KBM-7 (cell line): ENCODE measurements at regions of chr22 and their contacts with region 1.

Region 1: DNA sequence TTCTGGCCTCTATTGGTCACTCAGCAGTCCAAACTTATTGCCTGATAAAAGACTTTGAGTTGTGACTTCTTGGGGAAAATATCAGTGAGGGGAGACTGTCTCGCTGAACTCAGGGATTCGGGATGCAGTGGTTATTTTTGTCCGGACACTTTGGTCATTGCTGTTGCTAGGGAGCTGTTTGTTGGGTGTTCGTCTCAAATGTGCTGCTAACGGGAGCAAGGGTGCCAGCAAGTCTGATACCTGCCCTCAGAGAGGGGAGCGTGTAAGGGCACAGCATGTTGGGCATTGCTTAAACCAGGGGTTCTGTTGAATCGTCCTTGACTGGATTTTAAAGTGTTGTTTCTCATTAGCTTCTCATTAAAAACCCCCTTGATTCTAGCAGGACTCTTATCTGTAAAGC is 49.2 kb upstream of the SLC25A18 start:
- DNase-seq: no peak

Region 2: GRCh38 chr22:17084554-17085276 is 429.4 kb before region 1 on chr22 and contains the start of gene IL17RA:
- in situ Hi-C with region 1: loop called (anchors 10 kb)
- DNase-seq: peak; percentile 90

Region 3: DNA sequence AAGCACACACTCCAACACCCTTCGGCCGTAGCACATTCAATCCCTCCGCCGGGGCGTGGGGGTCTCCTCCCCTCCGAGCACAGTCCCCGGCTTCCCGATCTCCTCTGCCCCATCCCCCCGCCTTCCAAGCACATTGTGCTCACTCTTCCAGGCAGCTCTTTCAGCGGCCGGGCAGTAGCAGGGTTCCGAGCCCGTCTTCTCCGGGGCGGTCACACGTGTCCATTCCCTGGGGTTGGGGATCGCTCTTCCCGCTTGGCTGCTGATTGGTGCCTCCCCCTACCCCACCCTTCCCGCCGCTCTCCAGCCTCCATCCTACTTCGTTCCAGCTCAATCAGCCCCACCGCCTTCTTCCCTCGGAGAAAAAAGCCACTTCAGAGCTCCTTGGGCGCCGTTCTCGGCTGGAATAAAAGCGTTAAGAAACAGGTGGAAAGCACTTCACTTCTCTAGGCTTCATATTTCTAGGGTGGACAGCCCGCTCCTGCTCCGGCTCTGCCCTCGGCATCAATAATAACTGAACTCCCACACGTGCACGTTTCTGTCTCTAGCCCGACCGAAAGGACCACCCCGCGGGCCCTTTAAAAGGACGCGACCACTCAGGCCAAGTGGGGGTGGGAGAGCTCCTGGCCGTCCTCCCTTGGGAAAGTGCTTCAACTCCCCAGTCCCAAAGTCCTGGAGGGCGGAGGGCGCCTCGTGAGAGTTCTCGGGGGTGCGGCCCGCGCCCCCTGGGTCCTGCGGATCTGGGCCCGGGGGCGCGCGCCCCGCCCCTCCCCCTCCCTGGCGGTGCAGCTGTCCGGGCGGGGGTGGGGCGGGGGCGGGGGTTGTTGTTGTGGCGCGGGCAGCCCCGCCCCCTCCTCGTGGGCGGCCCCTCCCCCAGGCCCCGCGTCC is 145.3 kb before region 1 on chr22:
- in situ Hi-C with region 1: no loop called
- DNase-seq: peak; percentile 67